OCI-LY7 (cell line): ENCODE measurements at regions of chr15 and their contacts with region 1.

Region 1: GRCh38 chr15:44798826-44799225 is 62.5 kb downstream of the TRIM69 start:
- DNase-seq: no peak
- H3K4me3 ChIP-seq: no peak overlapping the region
- H3K27ac ChIP-seq: no peak overlapping the region
- H3K4me1 ChIP-seq: no peaks in the 10 kb centered on the region
- CTCF ChIP-seq: peak; percentile 41; the same call in 1 of the 2 replicates

Region 2: GRCh38 chr15:44753345-44753744 is 45.5 kb before region 1 on chr15:
- CTCF ChIA-PET with region 1: no interaction called
- POLR2A ChIA-PET with region 1: no interaction called
- intact Hi-C with region 1: no loop called
- DNase-seq: no peak
- H3K4me3 ChIP-seq: no peak overlapping the region
- H3K27ac ChIP-seq: no peak overlapping the region
- H3K4me1 ChIP-seq: no peaks in the 10 kb centered on the region
- CTCF ChIP-seq: no peak

Region 3: DNA sequence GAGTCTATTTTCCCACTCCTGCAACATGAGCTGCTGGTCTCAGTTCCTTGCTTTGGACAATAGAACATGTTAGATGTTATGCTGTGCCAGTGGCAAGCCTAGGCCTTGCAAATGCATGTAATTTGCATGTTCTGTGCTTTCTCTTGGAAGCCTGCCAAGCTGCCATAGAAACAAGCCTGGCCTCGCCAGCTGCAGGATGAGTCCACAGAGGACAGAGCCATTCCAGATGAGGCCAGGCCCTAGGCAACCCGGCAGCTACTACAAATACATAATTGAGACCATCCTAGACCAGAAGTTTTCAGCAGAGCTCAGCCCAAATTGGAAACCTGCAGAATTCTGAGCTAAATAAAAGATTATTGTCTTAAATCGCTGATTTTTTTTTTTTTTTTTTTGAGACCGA is 22.9 kb before region 1 on chr15:
- CTCF ChIA-PET with region 1: no interaction called
- POLR2A ChIA-PET with region 1: interaction called, 13 read pairs
- intact Hi-C with region 1: no loop called
- DNase-seq: peak; percentile 14
- H3K4me3 ChIP-seq: no peak overlapping the region
- H3K27ac ChIP-seq: no peak overlapping the region
- H3K4me1 ChIP-seq: peaks cover 5% of the 10 kb centered on the region
- CTCF ChIP-seq: no peak

Region 4: GRCh38 chr15:44788748-44789147 is 10.1 kb before region 1 on chr15:
- CTCF ChIA-PET with region 1: no interaction called
- POLR2A ChIA-PET with region 1: no interaction called
- intact Hi-C with region 1: no loop called
- DNase-seq: no peak
- H3K4me3 ChIP-seq: no peak overlapping the region
- H3K27ac ChIP-seq: no peak overlapping the region
- H3K4me1 ChIP-seq: peaks cover 4% of the 10 kb centered on the region
- CTCF ChIP-seq: no peak